ENCODE measurements at regions of chr5 and their contacts with region 1.

Region 1: GRCh38 chr5:145887976-145888574 is 15.3 kb upstream of the GRXCR2 start:
- DNase-seq: no peak
- H3K4me3 ChIP-seq: no peak overlapping the region
- CTCF ChIP-seq: peak; percentile 85

Region 2: DNA sequence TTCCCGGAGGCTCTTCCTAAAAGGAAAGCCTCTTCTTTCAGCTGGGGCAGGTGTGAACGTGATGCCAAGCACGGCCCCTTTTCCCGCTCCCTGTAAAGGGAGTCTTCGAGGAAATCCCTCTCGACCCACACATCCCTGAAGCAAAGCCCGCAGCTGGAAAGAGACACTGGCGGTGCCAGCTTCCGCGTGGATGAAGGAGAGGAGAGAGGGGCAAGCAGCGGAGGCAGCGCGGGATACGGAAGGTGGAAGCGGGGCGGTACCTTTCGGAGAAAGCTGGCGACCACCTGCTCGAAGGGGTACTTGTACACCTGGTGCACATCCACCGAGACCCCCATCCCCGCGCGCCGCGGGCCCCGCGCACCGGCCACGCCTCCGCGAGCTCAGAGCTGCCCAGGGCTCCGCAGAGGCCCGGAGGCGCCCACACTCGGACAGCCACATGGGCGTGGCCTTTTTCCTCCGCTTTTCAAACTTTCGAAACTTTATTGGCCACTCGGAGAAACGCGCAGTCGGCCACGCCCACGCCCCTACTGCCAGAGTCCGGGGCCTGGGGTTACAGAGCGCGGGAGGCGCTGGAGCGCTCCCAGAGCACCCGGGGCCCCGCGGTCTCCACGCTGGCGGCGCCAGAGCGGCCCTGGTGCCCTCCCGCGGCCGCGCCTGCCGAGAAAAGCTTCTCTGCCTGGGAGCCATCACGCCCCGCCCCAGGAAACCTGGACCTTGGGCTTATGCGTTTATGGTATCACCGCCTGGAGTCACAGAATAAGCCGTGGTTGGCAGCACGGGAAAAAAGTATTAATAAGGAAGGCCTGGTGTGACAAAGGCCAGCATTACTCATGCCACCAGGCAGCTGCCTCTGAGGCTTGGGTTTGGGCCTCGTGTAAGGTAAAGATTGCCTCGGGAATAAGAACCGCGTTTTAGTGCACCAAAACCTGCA is 52.9 kb before region 1 on chr5 and contains the start of gene PRELID2:
- CTCF ChIA-PET with region 1: interaction called, 12 read pairs
- POLR2A ChIA-PET with region 1: no interaction called
- DNase-seq: no peak
- H3K4me3 ChIP-seq: peak within 1 kb of the TSS; percentile 73
- CTCF ChIP-seq: no peak

Region 3: GRCh38 chr5:145863003-145863402 is 25.1 kb before region 1 on chr5:
- CTCF ChIA-PET with region 1: interaction called, 18 read pairs
- POLR2A ChIA-PET with region 1: no interaction called
- DNase-seq: no peak
- H3K4me3 ChIP-seq: no peak overlapping the region
- CTCF ChIP-seq: no peak

Region 4: DNA sequence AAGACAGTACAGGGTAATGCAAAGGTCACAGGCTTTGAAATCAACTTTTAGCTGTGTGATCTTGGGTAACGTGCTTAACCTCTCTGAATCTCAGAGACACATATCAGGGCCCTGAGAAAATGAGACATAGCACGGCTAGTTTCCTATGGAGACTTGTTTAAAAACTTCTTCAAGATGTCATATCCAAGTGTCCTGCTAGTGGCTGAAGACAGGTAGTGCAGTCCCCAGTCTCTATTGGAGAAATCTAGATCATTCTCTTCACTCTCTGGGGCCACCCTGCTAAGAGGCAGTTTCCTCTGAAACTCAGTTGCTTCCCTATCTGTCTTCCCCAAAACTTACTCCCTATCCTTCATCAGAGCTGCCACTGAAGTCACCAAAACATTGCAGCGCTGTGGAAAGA is 15.0 kb after region 1 on chr5:
- CTCF ChIA-PET with region 1: interaction called, 28 read pairs
- POLR2A ChIA-PET with region 1: no interaction called
- DNase-seq: no peak
- H3K4me3 ChIP-seq: no peak overlapping the region
- CTCF ChIP-seq: peak; percentile 15

Region 5: GRCh38 chr5:146007270-146007669 is 119.2 kb after region 1 on chr5:
- CTCF ChIA-PET with region 1: no interaction called
- POLR2A ChIA-PET with region 1: no interaction called
- DNase-seq: no peak
- H3K4me3 ChIP-seq: no peak overlapping the region
- CTCF ChIP-seq: no peak

Region 6: DNA sequence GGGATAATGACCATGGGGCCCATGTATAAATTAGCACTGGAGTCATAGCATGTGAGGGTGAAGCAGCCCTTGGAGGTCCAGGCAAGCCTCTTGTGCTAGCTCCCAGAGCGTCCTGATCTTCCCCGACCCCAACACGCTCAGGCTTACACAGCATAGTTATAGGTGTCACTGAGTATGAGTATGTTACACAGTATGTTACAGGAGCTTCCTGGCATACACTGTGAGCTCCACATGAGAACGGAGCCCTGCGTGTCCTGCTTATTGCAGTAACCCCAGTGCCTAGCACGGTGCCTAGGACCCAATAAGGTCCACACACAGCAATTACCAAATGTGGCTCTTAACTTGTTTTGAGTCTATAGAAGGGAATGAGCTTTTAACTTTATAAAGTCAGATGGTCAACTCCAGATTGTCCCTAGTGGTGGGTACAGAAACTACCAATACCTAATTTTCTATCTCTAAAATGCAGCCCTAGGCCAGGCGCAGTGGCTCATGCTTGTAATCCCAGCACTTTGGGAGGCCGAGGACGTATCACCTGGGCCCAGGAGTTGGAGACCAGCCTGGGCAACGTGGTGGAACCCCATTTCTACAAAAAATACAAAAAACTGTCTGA is 153.2 kb after region 1 on chr5:
- CTCF ChIA-PET with region 1: interaction called, 15 read pairs
- POLR2A ChIA-PET with region 1: no interaction called
- DNase-seq: no peak
- H3K4me3 ChIP-seq: no peak overlapping the region
- CTCF ChIP-seq: no peak

Region 7: DNA sequence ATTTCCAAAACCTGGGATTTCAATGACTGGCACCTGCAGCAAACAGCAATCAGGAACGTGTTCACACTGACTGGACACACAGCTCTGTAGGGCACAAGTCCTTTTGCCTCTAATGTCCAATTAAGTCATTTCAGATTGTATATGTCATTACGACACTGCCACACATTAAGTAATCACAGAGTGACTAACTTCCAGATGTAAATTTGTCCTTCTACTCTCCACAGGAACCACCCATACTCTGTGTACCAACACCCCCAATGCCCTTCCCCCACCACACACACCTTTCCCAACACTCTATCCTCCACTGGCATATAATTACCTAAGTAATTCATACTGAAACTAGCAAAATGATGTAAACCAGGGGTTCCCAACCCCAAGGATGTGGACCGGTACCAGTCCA is 263.9 kb after region 1 on chr5:
- CTCF ChIA-PET with region 1: no interaction called
- POLR2A ChIA-PET with region 1: no interaction called
- DNase-seq: no peak
- H3K4me3 ChIP-seq: no peak overlapping the region
- CTCF ChIP-seq: no peak